ENCODE measurements at regions of chr3 and their contacts with region 1.

Region 1: GRCh38 chr3:177359593-177360357 is 162.5 kb upstream of the TBL1XR1 start:
- DNase-seq: peak; percentile 96 to 97
- ATAC-seq: peak; percentile 87 to 93 (median 88)
- H3K4me3 ChIP-seq: peak overlapping the region; percentile 60
- H3K27ac ChIP-seq: peak overlapping the region; percentile 95
- H3K4me1 ChIP-seq: peaks cover 52% of the 10 kb centered on the region
- H3K27me3 ChIP-seq: no peaks in the 10 kb centered on the region
- CTCF ChIP-seq: no peak

Region 2: DNA sequence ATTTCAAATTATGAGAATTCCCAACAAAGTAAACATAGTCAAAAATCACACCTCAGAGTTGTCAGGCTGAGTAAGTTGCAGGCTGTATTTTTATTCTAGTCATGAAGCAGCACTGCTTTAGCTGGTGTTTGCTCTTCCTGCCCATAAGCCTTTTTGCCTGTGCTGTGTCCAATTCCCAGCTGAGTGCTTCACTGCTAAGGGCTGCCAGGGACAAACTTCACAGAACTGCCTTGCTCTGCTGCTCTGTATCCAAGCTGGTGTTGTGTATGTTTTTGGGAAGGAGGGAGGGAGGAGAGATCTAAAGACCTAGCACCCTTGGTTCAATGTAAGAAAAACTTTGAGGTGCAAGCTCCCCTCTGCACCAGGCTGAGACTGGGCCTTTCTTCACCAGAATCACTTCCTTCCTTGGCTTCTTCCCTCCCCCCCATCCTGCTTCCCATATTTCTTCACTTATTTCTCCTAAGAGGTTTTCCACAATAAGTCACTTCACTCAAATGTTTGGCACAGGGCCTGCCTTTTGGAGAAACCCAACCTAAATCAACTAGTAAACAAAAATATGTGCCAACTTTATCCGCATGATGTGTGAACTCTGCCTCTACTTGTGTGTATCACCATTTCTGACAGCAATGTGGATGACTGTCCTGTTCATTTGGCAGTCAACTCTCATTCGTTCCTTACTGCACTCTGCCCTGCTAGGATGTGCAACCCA is 318.6 kb before region 1 on chr3:
- intact Hi-C with region 1: loop called (anchors 5 kb)
- DNase-seq: peak in 1 of 2 donors; percentile 21
- ATAC-seq: peak; percentile 71 to 85 (median 78)
- H3K4me3 ChIP-seq: no peak overlapping the region
- H3K27ac ChIP-seq: peak overlapping the region; percentile 67
- H3K4me1 ChIP-seq: peaks cover 31% of the 10 kb centered on the region
- H3K27me3 ChIP-seq: no peaks in the 10 kb centered on the region
- CTCF ChIP-seq: no peak

Region 3: GRCh38 chr3:177294221-177294620 is 65.6 kb before region 1 on chr3:
- intact Hi-C with region 1: loop called in 1 of 2 experiments (anchors 5 kb)
- DNase-seq: peak; percentile 53 to 70
- ATAC-seq: peak; percentile 96 to 99 (median 98)
- H3K4me3 ChIP-seq: no peak overlapping the region
- H3K27ac ChIP-seq: peak overlapping the region; percentile 83
- H3K4me1 ChIP-seq: peaks cover 11% of the 10 kb centered on the region
- H3K27me3 ChIP-seq: no peaks in the 10 kb centered on the region
- CTCF ChIP-seq: no peak

Region 4: GRCh38 chr3:177452474-177453450 is 93.0 kb after region 1 on chr3:
- intact Hi-C with region 1: loop called in 1 of 2 experiments (anchors 5 kb)
- DNase-seq: no peak
- ATAC-seq: peak; percentile 53 to 64 (median 53)
- H3K4me3 ChIP-seq: no peak overlapping the region
- H3K27ac ChIP-seq: no peak overlapping the region
- H3K4me1 ChIP-seq: no peaks in the 10 kb centered on the region
- H3K27me3 ChIP-seq: no peaks in the 10 kb centered on the region
- CTCF ChIP-seq: no peak

Region 5: GRCh38 chr3:177777699-177778098 is 417.9 kb after region 1 on chr3:
- intact Hi-C with region 1: loop called in 1 of 2 experiments (anchors 10 kb)
- DNase-seq: peak; percentile 39 to 71
- ATAC-seq: peak; percentile 84 to 95 (median 89)
- H3K4me3 ChIP-seq: no peak overlapping the region
- H3K27ac ChIP-seq: no peak overlapping the region
- H3K4me1 ChIP-seq: peaks cover 16% of the 10 kb centered on the region
- H3K27me3 ChIP-seq: no peaks in the 10 kb centered on the region
- CTCF ChIP-seq: peak; percentile 77

Measured in psoas muscle (tissue), 8 donors.